ENCODE measurements at regions of chr9 and their contacts with region 1.

Region 1: DNA sequence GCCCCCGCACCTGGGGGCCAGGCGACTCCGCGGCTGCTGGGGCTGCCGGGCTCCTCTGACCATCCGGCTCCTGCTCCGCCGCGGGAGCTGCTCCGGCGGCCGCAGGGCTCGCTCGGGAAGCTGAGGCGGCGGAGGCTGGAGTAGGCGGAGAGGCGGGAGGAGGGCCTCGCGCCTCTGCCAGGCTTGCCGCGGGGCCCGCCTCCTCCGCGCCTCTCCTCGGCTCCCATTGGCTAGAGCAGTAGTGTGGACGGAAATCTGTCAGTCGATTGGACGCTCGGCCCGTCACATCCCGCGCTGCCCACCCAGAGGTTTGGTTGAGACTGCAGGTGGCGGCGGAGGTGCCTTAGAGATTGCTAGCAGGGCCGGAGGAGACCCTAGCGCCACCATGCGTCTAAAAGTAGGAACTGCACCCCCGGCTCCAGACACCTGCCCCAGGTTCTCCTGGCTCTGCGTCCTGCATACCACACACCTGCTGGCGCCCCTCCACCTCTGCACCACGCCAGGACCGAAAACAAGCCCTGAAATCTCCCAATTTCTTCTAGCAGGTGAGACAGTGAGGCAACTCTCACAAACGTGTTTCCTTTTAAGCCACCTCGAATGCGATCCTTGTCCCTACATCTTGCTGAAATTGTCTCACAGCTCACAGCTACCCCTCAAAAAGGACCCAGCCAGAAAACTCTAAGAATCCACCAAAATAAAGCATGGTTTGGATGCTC is at the start of gene SCAI:
- DNase-seq: peak; percentile 90
- ATAC-seq: peak; percentile 99
- H3K4me3 Mint-ChIP-seq: peak within 1 kb of the TSS; percentile 92
- H3K27ac Mint-ChIP-seq: peak within 1 kb of the TSS; percentile 36
- H3K4me1 Mint-ChIP-seq: peaks cover 22% of the 10 kb centered on the region
- H3K27me3 Mint-ChIP-seq: no peaks in the 10 kb centered on the region
- CTCF ChIP-seq: peak; percentile 91
- total RNA-seq, gene SCAI: 10.7 and 11.7 TPM in 2 replicates

Region 2: GRCh38 chr9:124940693-124941453 is 202.7 kb before region 1 on chr9 and contains the start of gene GOLGA1:
- CTCF ChIA-PET with region 1: no interaction called
- POLR2A ChIA-PET with region 1: interaction called, 4 read pairs
- intact Hi-C with region 1: loop called (anchors 1 kb)
- DNase-seq: peak; percentile 92
- ATAC-seq: peak; percentile 87
- H3K4me3 Mint-ChIP-seq: peak within 1 kb of the TSS; percentile 96
- H3K27ac Mint-ChIP-seq: peak within 1 kb of the TSS; percentile 98
- H3K4me1 Mint-ChIP-seq: peaks cover 23% of the 10 kb centered on the region
- H3K27me3 Mint-ChIP-seq: no peaks in the 10 kb centered on the region
- CTCF ChIP-seq: no peak
- total RNA-seq, gene GOLGA1: 11.8 and 14.0 TPM in 2 replicates

Region 3: DNA sequence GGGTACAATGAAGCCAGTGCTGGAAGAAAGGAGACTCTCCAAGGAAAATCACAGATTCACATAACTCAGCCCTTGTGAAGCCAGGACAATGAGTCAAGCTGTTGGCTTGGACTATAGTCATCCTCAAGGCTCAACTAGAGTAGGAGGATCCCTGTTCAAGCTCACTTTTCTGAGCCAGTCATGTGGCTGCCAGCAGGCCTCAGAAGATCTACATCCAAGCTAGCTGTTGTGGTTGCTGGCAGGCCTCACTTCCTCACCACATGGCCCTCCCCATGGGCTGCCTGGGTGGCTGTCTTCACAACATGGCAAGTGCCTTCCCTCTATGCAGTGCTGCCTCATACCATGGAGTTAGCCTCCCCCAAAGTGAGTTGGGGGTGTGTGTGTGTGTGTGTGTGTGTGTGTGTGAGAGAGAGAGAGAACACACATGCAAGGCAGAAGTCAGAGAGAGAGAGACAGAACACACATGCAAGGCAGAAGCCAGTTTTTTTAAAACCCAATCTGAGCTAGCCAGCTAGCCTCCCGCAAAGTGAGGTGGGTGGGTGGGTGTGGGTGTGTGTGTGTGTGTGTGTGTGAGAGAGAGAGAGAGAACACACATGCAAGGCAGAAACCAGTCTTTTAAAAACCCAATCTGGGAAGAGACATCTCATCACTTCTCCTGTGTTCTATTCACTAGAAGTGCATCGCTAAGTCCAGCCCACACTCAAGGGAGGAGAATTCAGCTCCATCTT is 17.4 kb before region 1 on chr9:
- CTCF ChIA-PET with region 1: no interaction called
- POLR2A ChIA-PET with region 1: interaction called, 7 read pairs
- intact Hi-C with region 1: loop called (anchors 1 kb)
- DNase-seq: peak; percentile 38
- ATAC-seq: peak; percentile 98
- H3K4me3 Mint-ChIP-seq: no peak overlapping the region
- H3K27ac Mint-ChIP-seq: peak overlapping the region; percentile 92
- H3K4me1 Mint-ChIP-seq: peaks cover 16% of the 10 kb centered on the region
- H3K27me3 Mint-ChIP-seq: no peaks in the 10 kb centered on the region
- CTCF ChIP-seq: no peak

Region 4: DNA sequence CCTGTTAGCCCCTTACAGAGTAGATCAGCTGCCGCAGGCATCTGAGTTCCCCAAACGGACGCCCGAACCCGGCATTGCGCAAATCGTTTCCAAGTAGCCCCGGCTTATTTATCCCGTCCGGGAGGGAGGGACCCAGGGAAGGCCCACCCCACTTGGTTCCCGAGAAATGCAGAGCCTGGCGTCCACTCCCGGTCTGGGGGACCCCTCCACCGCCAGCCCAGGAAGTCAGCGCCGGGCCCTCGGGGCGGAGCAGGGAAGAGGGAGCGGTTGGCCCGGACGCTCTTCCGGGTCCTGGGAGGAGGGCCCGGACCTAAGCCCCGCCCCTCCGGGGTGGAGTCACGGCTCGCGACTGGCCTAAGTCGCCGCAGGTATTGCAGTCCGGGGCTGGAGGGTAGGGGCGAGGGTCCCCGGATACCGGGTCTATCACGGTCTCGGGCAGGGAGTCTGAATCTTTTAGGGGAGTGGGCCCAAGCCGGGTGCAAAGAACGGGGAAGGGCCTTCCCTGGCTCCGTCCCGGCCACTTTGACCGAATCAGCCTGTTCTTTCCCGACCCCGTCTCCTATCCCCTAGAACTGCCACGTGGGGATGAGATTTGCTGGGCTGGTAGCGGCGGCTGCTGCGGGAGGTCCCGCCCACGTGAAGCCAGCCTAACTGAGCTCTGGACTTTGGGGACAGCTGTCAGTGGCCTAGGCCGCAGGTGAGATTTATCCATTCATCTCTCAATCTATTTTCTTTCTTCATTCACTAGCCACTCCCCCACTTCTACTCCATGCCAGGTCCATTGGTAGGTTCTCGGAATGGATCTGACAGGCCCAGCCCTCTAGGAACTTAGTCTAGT is 56.9 kb after region 1 on chr9 and contains the start of gene RABEPK:
- CTCF ChIA-PET with region 1: no interaction called
- POLR2A ChIA-PET with region 1: interaction called, 4 read pairs
- intact Hi-C with region 1: loop called (anchors 1 kb)
- DNase-seq: peak; percentile 95
- ATAC-seq: peak; percentile 98
- H3K4me3 Mint-ChIP-seq: peak within 1 kb of the TSS; percentile 94
- H3K27ac Mint-ChIP-seq: peak within 1 kb of the TSS; percentile 92
- H3K4me1 Mint-ChIP-seq: peaks cover 13% of the 10 kb centered on the region
- H3K27me3 Mint-ChIP-seq: no peaks in the 10 kb centered on the region
- CTCF ChIP-seq: no peak
- total RNA-seq, gene RABEPK: 19.1 and 19.4 TPM in 2 replicates

Region 5: DNA sequence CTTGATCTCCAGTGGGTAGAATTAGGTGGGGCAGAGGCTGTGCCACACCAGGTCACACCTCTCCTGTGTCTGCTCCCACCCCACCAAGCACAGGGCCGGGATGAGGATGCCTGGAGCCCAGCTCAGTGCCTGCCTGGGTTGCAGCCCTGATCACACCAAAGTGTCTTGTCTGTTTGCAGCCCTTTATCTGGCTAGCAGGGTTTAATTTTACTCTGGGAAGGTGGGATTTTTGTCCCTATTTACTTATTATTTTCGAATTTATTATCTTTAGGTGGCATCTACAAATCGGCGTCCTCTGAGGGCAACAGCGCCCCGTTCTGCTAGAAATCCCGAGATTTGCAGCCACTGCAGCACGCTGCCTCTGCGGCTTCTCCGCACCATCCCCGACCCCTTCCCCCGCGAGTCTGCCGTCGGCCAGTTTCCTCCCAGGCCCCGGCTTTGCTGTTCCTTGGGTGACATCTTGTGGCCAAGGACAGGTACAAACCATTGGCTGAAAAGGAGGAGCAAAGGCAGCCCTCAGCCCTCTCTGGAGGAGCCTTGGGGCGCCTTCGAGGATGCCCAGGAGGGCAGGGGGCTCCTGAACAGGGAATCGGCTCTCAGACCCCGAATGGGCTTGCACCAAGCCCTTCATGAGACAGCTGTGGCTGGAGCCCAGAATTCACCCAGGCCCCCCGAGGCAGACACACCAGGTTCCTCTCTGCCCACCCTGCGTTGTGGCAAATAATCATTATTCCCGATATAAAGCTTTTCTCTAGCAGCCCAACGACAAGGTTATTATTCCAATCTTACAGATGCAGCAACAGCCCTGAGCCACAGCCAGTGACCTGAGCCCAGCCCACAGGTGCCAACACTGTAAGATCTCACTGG is 231.1 kb after region 1 on chr9:
- CTCF ChIA-PET with region 1: no interaction called
- POLR2A ChIA-PET with region 1: no interaction called
- intact Hi-C with region 1: loop called (anchors 10 kb)
- DNase-seq: peak; percentile 43
- ATAC-seq: peak; percentile 95
- H3K4me3 Mint-ChIP-seq: peak overlapping the region; percentile 32
- H3K27ac Mint-ChIP-seq: no peak overlapping the region
- H3K4me1 Mint-ChIP-seq: peaks cover 4% of the 10 kb centered on the region
- H3K27me3 Mint-ChIP-seq: peaks cover 4% of the 10 kb centered on the region
- CTCF ChIP-seq: no peak